Activated B cell treated with CpG ODN at 0.5 μM for 24 hours (primary cell): ENCODE measurements at regions of chr16 and their contacts with region 1.

Region 1: DNA sequence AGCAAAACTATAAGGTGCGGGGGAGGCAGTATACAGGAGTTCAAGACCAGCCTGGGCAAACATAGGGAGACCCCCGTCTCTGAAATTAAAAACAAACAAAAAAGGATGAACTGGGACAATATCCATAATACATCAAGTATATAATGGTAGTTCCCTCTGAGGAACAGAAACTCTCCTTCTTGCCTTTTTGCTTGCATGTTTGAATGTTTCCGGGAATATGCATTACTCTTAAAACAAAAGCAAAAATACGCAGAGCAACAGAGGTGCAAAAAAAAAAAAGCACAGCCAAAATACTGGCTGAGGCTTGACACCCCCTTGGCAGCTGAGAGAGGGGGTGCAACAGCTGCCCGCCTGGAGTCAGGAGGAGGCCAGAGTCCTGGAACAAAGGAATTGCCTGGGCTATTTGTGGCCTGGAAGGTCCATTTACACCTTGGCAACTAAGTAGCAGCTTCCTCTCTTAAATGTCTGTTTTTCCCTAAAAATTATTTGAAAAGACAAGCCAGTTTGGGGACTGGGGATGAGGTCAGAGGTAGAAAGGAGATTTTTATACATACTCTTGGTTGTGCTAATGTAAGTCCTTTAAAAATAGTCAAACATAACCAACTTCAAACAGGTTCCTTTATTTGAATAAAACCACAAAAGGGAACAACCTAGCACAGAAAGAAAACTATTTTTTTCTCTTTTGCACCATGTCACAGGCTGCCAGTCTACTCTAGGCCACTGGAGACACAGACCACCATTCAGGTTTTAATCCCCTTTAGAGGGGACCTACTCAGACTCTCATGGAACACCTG is 19.5 kb downstream of the USP7 start:
- DNase-seq: no peak
- ATAC-seq: peak; percentile 83
- H3K4me3 Mint-ChIP-seq: peak overlapping the region; percentile 80
- H3K27ac Mint-ChIP-seq: peak overlapping the region; percentile 88
- H3K4me1 Mint-ChIP-seq: peaks cover 99% of the 10 kb centered on the region
- H3K27me3 Mint-ChIP-seq: no peaks in the 10 kb centered on the region
- CTCF ChIP-seq: no peak

Region 2: DNA sequence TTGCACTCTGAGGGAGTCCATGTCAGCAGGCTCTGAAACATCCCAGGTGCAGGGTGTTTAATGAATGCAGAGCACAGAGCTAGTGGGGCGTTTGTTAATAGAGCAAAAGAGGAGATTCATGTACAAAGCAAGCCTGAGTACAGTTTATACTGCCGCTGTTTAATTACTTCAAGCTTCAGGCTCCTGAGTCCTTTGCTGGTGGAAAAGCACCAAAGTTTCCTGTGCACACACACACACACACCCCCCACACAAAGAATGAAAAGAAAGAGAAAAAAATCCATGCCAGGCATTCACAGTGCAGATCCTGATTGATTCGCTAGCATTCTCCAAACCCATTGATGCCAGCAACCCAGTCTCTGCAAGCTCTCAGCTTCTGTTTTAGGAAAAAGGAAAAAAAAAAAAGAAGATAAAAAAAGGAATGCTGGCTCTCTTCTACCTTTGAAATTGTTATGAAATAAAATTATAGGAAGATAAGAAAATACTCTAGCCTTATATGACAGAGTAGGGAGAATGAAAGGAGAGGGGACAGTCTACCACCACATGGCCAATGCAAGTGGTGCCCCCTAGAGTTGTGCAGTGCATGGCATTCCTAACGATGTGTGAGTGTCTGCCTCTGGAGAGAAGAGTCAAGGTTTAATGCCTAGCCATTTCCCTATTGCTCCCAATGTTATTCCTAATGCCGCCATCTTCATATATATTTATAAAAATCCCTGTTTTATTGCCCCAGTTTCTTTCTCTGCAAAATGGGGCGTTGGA is 570.3 kb before region 1 on chr16:
- CTCF ChIA-PET with region 1: no interaction called
- POLR2A ChIA-PET with region 1: no interaction called
- intact Hi-C with region 1: no loop called
- DNase-seq: no peak
- ATAC-seq: no peak
- H3K4me3 Mint-ChIP-seq: no peak overlapping the region
- H3K27ac Mint-ChIP-seq: no peak overlapping the region
- H3K4me1 Mint-ChIP-seq: no peaks in the 10 kb centered on the region
- H3K27me3 Mint-ChIP-seq: no peaks in the 10 kb centered on the region
- CTCF ChIP-seq: no peak

Region 3: DNA sequence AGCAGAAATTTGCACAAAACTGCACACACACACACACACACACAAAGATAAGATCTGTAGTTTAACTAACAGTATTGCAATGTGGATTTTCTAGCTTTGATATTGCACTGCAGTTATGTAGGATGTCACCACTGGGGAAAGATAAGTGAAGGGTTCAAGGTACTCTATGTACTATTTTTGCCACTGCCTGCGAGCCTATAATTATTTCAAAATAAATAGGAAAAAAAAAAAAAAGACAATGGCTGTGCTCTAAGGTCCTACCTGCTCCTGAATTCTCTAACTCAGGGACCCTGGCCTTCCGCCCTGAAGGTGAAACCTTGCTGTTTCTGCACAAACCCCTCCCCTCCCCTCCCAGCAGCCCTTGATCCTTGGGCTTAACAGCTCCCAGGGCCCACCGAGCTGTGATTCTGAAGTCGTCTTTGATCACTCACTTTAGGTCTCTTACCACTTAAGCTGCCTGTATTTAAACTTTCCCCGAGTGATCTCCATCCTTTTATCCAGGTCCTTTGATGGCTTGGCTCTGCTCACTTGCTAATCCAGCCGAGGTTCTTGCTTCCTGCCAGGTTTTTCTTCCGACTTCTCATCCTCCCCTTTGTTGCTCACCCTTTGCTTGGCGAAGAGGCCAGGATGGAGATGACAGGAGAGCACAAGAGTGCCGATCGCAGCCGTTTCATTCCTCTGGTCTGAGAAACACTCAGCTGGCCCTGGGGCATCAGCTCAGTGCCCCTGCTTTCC is 391.5 kb before region 1 on chr16:
- CTCF ChIA-PET with region 1: no interaction called
- POLR2A ChIA-PET with region 1: no interaction called
- intact Hi-C with region 1: no loop called
- DNase-seq: no peak
- ATAC-seq: no peak
- H3K4me3 Mint-ChIP-seq: no peak overlapping the region
- H3K27ac Mint-ChIP-seq: no peak overlapping the region
- H3K4me1 Mint-ChIP-seq: no peaks in the 10 kb centered on the region
- H3K27me3 Mint-ChIP-seq: peaks cover 45% of the 10 kb centered on the region
- CTCF ChIP-seq: no peak

Region 4: GRCh38 chr16:8916541-8917225 is 27.5 kb before region 1 on chr16:
- CTCF ChIA-PET with region 1: no interaction called
- POLR2A ChIA-PET with region 1: no interaction called
- intact Hi-C with region 1: no loop called
- DNase-seq: no peak
- ATAC-seq: peak; percentile 54
- H3K4me3 Mint-ChIP-seq: no peak overlapping the region
- H3K27ac Mint-ChIP-seq: peak overlapping the region; percentile 59
- H3K4me1 Mint-ChIP-seq: peaks cover 17% of the 10 kb centered on the region
- H3K27me3 Mint-ChIP-seq: no peaks in the 10 kb centered on the region
- CTCF ChIP-seq: no peak

Region 5: DNA sequence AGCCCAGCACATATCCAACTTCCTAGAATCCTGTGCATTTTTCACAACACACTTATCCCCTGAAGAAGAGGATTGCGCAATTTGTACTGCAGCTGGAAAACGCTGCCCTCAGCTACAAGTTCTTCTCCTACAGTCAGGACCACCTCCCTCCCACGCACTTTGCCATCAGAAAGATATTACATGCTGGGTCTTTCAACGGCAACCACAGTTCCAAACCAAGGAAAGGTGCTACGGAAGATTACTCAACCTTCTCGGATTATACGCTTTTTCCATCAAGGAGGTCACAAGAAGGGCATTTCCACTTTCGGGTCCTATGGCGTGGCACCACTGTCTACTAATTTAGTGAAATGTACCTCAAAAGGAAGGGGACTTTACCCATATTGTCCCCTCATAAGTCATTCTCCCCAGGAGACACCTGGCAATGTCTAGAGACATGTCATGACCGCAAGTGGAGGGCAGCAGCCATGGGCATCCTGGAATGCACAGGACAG is 15.7 kb before region 1 on chr16:
- CTCF ChIA-PET with region 1: no interaction called
- POLR2A ChIA-PET with region 1: interaction called, 3 read pairs
- intact Hi-C with region 1: loop called (anchors 2 kb)
- DNase-seq: no peak
- ATAC-seq: peak; percentile 43
- H3K4me3 Mint-ChIP-seq: peak overlapping the region; percentile 41
- H3K27ac Mint-ChIP-seq: peak overlapping the region; percentile 79
- H3K4me1 Mint-ChIP-seq: peaks cover 51% of the 10 kb centered on the region
- H3K27me3 Mint-ChIP-seq: no peaks in the 10 kb centered on the region
- CTCF ChIP-seq: no peak

Region 6: GRCh38 chr16:8958344-8959167 is 14.4 kb after region 1 on chr16:
- CTCF ChIA-PET with region 1: interaction called, 3 read pairs
- POLR2A ChIA-PET with region 1: interaction called, 13 read pairs
- intact Hi-C with region 1: loop called (anchors 1 kb)
- DNase-seq: no peak
- ATAC-seq: no peak
- H3K4me3 Mint-ChIP-seq: peak overlapping the region; percentile 64
- H3K27ac Mint-ChIP-seq: peak overlapping the region; percentile 62
- H3K4me1 Mint-ChIP-seq: peaks cover 82% of the 10 kb centered on the region
- H3K27me3 Mint-ChIP-seq: no peaks in the 10 kb centered on the region
- CTCF ChIP-seq: no peak

Region 7: GRCh38 chr16:9081843-9082242 is 137.7 kb after region 1 on chr16:
- CTCF ChIA-PET with region 1: no interaction called
- POLR2A ChIA-PET with region 1: no interaction called
- intact Hi-C with region 1: no loop called
- DNase-seq: no peak
- ATAC-seq: no peak
- H3K4me3 Mint-ChIP-seq: no peak overlapping the region
- H3K27ac Mint-ChIP-seq: no peak overlapping the region
- H3K4me1 Mint-ChIP-seq: peaks cover 22% of the 10 kb centered on the region
- H3K27me3 Mint-ChIP-seq: no peaks in the 10 kb centered on the region
- CTCF ChIP-seq: no peak